Activated CD4-positive, alpha-beta T cell treated with anti-CD3 and anti-CD28 coated beads, Interleukin-2, amount 10 ng/mL, durations not matched to agents 24 days and 14 days (primary cell): ENCODE measurements at regions of chr14 and their contacts with region 1.

Region 1: GRCh38 chr14:104708606-104709268 is 15.3 kb upstream of the ADSS1 start:
- DNase-seq: peak; percentile 93
- H3K4me3 Mint-ChIP-seq: no peak overlapping the region
- H3K27ac Mint-ChIP-seq: peak overlapping the region; percentile 48
- H3K4me1 Mint-ChIP-seq: peaks cover 2% of the 10 kb centered on the region
- H3K27me3 Mint-ChIP-seq: no peaks in the 10 kb centered on the region

Region 2: GRCh38 chr14:104650057-104650981 is 58.4 kb before region 1 on chr14:
- intact Hi-C with region 1: loop called (anchors 1 kb)
- DNase-seq: peak; percentile 89
- H3K4me3 Mint-ChIP-seq: peak overlapping the region; percentile 59
- H3K27ac Mint-ChIP-seq: no peak overlapping the region
- H3K4me1 Mint-ChIP-seq: no peaks in the 10 kb centered on the region
- H3K27me3 Mint-ChIP-seq: peaks cover 11% of the 10 kb centered on the region

Region 3: GRCh38 chr14:104665657-104666522 is 42.8 kb before region 1 on chr14:
- intact Hi-C with region 1: loop called (anchors 1 kb)
- DNase-seq: peak; percentile 77
- H3K4me3 Mint-ChIP-seq: no peak overlapping the region
- H3K27ac Mint-ChIP-seq: no peak overlapping the region
- H3K4me1 Mint-ChIP-seq: peaks cover 14% of the 10 kb centered on the region
- H3K27me3 Mint-ChIP-seq: peaks cover 22% of the 10 kb centered on the region

Region 4: GRCh38 chr14:104786091-104786586 is 77.4 kb after region 1 on chr14:
- intact Hi-C with region 1: no loop called
- DNase-seq: no peak
- H3K4me3 Mint-ChIP-seq: no peak overlapping the region
- H3K27ac Mint-ChIP-seq: no peak overlapping the region
- H3K4me1 Mint-ChIP-seq: peaks cover 2% of the 10 kb centered on the region
- H3K27me3 Mint-ChIP-seq: no peaks in the 10 kb centered on the region